Activated T-helper 1 cell treated with anti-CD3 and anti-CD28 coated beads, Interleukin-12 subunit alpha, Interleukin-12 subunit beta, Interleukin-2, Interleukin-4 antibody, amounts not matched to agents 30 ng/mL and 10 ng/mL and 1 ng/mL, durations not matched to agents 14 hours and 24 hours and 36 hours (primary cell): ENCODE measurements at regions of chr19 and their contacts with region 1.

Region 1: GRCh38 chr19:11435058-11435832 is at the starts of genes ODAD3 and PRKCSH:
- DNase-seq: peak; percentile 99
- H3K4me3 Mint-ChIP-seq: peak within 1 kb of the TSS; percentile 99
- H3K27ac Mint-ChIP-seq: peak within 1 kb of the TSS; percentile 96
- H3K4me1 Mint-ChIP-seq: peaks cover 19% of the 10 kb centered on the region
- H3K27me3 Mint-ChIP-seq: peaks cover 6% of the 10 kb centered on the region
- total RNA-seq, gene ODAD3: not detected in 2 replicates
- total RNA-seq, gene PRKCSH: 322 and 334 TPM in 2 replicates

Region 2: DNA sequence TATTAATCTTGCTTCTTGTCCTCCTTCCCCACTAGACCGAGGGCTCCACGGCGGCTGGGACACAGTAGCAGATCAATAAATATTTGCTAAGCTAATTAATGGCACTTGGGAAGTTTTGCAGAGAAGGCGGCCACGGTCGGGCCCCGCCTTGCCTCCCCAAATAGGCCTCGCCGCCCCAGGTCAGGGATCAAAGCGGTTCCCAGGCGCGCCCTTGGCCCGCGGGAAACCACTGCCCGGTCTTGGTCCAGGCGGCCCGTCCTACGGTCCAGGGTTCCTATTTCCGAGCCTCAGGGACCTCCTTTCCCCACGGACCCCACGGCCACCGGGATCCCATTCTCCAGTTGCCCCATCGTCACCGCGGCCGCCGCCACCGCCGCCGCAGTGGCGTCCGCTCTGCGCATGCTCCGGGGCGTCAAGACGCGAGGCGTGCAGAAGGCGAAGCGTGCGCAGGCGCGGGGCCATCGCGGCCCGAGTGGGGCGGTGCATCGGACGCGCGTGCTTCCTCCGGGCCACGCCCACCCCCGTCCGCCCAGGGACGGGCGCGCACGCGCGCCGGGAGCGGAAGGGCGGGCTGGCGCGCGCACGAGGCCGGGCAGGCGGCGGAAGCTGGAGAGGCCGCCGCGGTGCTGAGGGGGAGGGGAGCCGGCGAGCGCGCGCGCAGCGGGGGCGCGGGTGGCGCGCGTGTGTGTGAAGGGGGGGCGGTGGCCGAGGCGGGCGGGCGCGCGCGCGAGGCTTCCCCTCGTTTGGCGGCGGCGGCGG is 474.8 kb before region 1 on chr19 and contains the start of gene SMARCA4:
- intact Hi-C with region 1: loop called (anchors 1 kb)
- DNase-seq: peak; percentile 99
- H3K4me3 Mint-ChIP-seq: peak within 1 kb of the TSS; percentile 89
- H3K27ac Mint-ChIP-seq: peak within 1 kb of the TSS; percentile 87
- H3K4me1 Mint-ChIP-seq: peaks cover 39% of the 10 kb centered on the region
- H3K27me3 Mint-ChIP-seq: peaks cover under 1% of the 10 kb centered on the region
- total RNA-seq, gene SMARCA4: 177 and 178 TPM in 2 replicates

Region 3: GRCh38 chr19:11293433-11294389 is 141.5 kb before region 1 on chr19:
- intact Hi-C with region 1: loop called (anchors 1 kb)
- DNase-seq: peak; percentile 72
- H3K4me3 Mint-ChIP-seq: peak overlapping the region; percentile 49
- H3K27ac Mint-ChIP-seq: no peak overlapping the region
- H3K4me1 Mint-ChIP-seq: peaks cover 10% of the 10 kb centered on the region
- H3K27me3 Mint-ChIP-seq: peaks cover 20% of the 10 kb centered on the region

Region 4: GRCh38 chr19:11380653-11381534 is 54.4 kb before region 1 on chr19:
- intact Hi-C with region 1: loop called (anchors 1 kb)
- DNase-seq: peak; percentile 96
- H3K4me3 Mint-ChIP-seq: peak overlapping the region; percentile 88
- H3K27ac Mint-ChIP-seq: peak overlapping the region; percentile 100
- H3K4me1 Mint-ChIP-seq: peaks cover 32% of the 10 kb centered on the region
- H3K27me3 Mint-ChIP-seq: peaks cover 16% of the 10 kb centered on the region

Region 5: DNA sequence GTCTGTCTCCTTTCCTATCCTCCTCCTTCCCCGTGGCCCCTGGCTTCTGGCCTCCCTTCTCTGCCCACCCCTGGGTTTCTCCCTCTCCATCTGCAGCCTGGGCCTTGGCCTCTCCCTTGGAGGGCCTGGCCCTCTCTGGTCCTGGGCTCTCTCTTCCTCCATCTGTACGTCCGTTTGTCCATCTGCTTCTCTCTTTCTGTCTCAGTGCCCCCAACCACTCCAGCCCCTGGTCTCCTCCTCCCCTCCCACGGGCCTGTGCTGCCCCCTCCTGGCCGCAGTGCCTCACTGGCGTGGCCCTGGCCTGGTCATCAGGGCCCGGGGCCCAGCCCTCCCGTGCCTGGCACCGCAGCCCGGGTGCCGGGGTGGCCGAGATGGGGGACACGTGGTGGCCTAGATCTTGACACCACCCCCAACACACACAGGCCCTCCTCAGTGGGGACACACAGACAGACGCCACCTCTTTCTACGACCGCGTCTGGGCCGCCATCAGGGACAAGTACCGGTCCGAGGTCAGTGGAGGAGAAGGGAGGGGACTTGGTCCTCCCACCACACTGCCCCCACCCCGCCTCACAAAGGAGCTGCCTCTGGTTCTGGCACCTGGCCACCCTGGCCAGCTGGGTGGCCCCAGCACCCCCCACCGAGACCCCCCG is 11.5 kb after region 1 on chr19:
- intact Hi-C with region 1: no loop called
- DNase-seq: no peak
- H3K4me3 Mint-ChIP-seq: no peak overlapping the region
- H3K27ac Mint-ChIP-seq: no peak overlapping the region
- H3K4me1 Mint-ChIP-seq: no peaks in the 10 kb centered on the region
- H3K27me3 Mint-ChIP-seq: no peaks in the 10 kb centered on the region

Region 6: DNA sequence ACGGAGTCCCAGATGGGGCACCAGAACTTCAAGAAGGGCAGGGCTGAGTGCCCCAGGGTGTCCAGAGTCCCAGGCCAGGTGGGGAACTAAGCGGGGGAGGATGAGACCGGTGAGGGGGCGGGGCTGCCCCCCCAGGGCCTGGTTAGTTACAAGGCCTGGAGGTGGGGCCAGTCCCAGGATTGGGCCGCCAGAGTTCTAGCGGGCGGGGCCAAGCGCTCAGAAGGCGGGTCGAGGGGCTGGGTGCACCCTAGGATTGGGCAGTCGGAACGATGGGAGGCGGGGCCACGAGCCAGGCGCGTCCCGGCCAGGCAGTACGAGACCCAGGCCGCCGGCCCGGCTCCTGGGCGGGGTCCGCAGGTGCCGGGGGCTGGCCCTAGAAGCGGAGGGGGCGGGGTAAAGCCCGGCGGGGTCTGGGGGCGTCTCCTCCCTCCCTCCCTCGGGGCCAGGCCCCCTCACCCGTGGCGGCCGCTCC is 69.8 kb after region 1 on chr19:
- intact Hi-C with region 1: loop called (anchors 1 kb)
- DNase-seq: peak; percentile 97
- H3K4me3 Mint-ChIP-seq: peak overlapping the region; percentile 91
- H3K27ac Mint-ChIP-seq: peak overlapping the region; percentile 84
- H3K4me1 Mint-ChIP-seq: peaks cover 13% of the 10 kb centered on the region
- H3K27me3 Mint-ChIP-seq: no peaks in the 10 kb centered on the region

Region 7: DNA sequence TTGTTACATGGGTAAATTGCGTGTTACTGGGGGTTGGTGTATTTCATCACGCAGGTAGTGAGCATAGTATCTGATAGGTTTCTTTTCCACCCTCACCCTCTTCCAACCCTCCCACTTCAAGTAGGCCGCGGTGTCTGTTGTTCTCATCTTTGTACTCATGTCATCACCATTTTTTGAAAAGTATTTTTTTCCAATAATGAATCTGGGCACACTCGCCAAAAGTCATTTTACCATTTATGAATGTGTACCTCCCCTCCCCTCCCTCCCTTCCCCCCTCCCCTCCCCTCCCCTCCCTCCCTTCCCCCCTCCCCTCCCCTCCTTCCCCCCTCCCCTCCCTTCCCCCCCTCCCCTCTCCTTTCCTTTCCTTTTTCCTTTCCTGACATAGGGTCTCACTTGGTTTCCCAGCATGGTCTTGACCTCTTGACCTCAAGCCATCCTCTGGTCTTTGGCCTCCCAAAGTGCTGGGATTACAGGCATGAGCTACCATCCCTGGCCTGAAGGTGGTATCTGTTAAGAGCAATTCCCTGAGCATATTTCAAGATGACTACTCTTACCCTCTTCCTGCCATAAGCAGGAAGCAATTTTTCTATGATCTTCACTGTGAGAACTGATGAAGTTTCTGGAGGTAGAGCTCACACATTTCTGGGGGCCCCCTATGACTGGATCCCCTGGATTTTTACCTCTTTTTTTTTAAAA is 177.7 kb after region 1 on chr19:
- intact Hi-C with region 1: no loop called
- DNase-seq: no peak
- H3K4me3 Mint-ChIP-seq: no peak overlapping the region
- H3K27ac Mint-ChIP-seq: no peak overlapping the region
- H3K4me1 Mint-ChIP-seq: no peaks in the 10 kb centered on the region
- H3K27me3 Mint-ChIP-seq: no peaks in the 10 kb centered on the region

Region 8: GRCh38 chr19:11924886-11925650 is 489.8 kb after region 1 on chr19 and contains the start of gene ZNF700:
- intact Hi-C with region 1: loop called (anchors 10 kb)
- DNase-seq: peak; percentile 89
- H3K4me3 Mint-ChIP-seq: peak within 1 kb of the TSS; percentile 96
- H3K27ac Mint-ChIP-seq: peak within 1 kb of the TSS; percentile 98
- H3K4me1 Mint-ChIP-seq: peaks cover 33% of the 10 kb centered on the region
- H3K27me3 Mint-ChIP-seq: no peaks in the 10 kb centered on the region
- total RNA-seq, gene ZNF700: 11.9 and 12.2 TPM in 2 replicates